ENCODE measurements at regions of chr17 and their contacts with region 1.

Region 1: DNA sequence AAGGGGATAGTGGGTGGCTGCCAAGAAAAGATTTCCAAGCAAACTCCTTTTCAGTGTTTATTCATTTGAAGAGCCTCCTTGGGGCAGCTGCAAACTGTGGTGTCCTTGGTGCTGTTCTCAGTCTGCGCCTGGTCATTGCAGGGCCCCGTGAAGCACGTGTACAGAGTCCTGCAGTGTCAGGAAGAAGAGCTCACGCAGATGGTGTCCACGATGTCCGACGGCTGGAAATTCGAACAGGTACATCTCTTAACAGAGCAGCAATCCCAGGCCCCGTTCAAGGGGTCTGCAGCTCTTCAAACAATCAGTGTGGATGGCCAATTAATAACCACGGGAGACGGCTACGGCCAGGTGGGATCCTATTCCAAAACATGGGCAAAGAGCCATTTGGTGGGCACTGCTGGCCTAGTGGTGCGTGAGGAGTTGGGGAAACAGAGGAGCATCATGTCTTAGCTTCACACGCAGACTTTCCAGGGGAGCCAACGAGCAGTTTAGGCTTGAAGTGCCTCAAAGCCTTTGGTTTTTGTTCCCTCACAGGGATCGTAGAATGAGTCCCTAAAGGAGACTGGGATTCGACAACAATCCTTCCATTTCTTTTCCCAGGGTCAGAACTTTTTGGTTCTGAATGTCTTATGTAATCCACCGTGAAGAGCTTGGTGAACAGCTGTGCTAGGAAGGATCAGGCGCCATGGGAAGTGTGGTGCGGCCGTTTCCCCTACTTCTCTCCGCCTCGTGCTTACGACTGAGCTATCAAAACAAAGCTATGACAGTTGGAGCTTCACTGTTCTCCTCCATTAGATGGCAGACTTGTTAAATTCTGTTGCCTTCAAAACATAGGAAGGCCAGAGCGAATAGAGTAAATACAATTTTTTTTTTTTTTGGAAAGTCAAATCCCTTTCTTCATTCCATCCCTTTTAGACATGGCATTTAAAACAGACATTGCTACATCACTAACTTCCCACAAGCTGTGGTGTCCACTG is 12.6 kb downstream of the KCTD2 start:
- DNase-seq: peak; percentile 82
- H3K4me3 ChIP-seq: no peak overlapping the region
- H3K27ac ChIP-seq: peak overlapping the region; percentile 70 to 79 (median 74)
- H3K4me1 ChIP-seq: peaks cover 0 to 18% (median 13%) of the 10 kb centered on the region in 4 donors
- H3K27me3 ChIP-seq: no peaks in the 10 kb centered on the region
- CTCF ChIP-seq: peak; percentile 30 to 45 (median 36)
- EP300 ChIP-seq: no peak
- POLR2A ChIP-seq: no peak

Region 2: GRCh38 chr17:74972107-74972972 is 87.3 kb before region 1 on chr17 and contains the start of gene HID1:
- intact Hi-C with region 1: no loop called
- DNase-seq: no peak
- H3K4me3 ChIP-seq: peak within 1 kb of the TSS; percentile 51 to 65 (median 56)
- H3K27ac ChIP-seq: peak within 1 kb of the TSS; percentile 28 to 61 (median 50)
- H3K4me1 ChIP-seq: peaks cover 0 to 24% (median 22%) of the 10 kb centered on the region in 4 donors
- H3K27me3 ChIP-seq: peaks cover 9 to 23% (median 23%) of the 10 kb centered on the region in 3 donors
- CTCF ChIP-seq: no peak
- EP300 ChIP-seq: no peak
- POLR2A ChIP-seq: no peak
- total RNA-seq, gene HID1: 7.1 to 21.6 (median 8.3) TPM

Region 3: DNA sequence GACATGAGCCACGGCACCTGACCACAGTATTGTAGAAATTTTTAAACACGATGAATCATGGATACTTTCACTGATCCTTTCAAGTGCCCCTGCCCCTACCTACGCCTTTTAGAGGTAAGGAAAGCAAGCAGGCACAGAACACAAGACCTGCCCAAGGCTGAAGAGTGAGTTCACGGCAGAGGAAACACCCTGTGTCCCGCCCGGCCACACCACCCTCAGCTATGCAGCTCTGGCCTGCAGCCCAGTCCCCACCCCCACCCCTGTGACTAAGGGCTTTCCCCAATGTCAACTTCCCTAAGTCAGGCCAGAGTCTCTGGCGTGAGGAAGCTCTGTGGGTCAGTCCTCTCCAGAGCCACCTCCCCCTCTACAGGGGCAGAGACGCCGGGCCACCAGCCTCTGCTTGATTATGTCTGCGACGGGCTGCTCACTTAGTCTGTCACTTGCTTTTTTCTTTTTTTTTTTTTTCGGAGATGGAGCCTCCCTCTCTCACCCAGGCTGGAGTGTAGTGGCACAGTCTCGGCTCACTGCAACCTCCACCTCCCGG is 36.5 kb after region 1 on chr17:
- intact Hi-C with region 1: no loop called
- DNase-seq: no peak
- H3K4me3 ChIP-seq: no peak overlapping the region
- H3K27ac ChIP-seq: peak overlapping the region in 1 of 4 donors; percentile 46
- H3K4me1 ChIP-seq: peaks cover 0 to 18% (median 9%) of the 10 kb centered on the region in 4 donors
- H3K27me3 ChIP-seq: no peaks in the 10 kb centered on the region
- CTCF ChIP-seq: no peak
- EP300 ChIP-seq: no peak
- POLR2A ChIP-seq: no peak

Region 4: DNA sequence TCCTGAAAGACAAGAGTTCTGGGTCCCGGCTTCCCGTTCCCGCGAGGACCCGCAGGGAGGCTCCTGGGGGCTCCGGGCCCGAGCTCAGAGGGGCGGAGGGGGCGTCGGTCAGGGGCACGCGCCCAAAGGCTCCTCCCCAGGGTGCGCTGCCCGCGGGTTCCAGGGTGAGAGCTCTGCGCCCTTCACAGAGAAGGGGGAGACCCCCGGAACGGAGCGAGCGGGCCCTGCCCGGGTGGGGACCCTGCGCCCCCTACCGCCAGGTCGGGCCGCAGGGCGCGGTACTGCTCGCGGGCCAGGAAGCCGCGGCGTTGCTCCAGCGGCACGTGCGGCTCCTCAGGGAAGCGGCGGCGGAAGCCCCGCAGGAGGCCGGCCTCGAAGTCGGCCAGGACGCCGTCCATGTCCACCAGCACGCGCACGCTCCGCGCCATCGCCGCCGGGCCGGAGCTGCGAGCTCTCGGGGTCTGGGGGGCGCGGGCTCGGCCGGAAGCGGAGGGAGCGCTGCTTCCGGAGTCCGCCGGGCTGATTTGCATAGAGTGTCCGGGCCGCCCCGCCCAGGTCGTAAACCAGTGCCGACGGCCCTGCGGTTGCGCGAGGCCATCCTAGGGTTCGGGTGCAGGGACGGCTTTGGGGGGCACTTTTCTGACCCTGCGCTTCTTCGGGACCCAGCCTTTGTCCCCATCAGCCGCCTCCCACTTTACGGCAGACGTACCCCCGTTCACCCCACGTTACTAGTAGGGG is 71.8 kb after region 1 on chr17 and contains the start of gene NT5C:
- intact Hi-C with region 1: loop called (anchors 2 kb)
- DNase-seq: peak; percentile 91
- H3K4me3 ChIP-seq: peak within 1 kb of the TSS; percentile 68 to 86 (median 74)
- H3K27ac ChIP-seq: peak within 1 kb of the TSS; percentile 88 to 91 (median 88)
- H3K4me1 ChIP-seq: peaks cover 0 to 23% (median 11%) of the 10 kb centered on the region in 4 donors
- H3K27me3 ChIP-seq: no peaks in the 10 kb centered on the region
- CTCF ChIP-seq: peak; percentile 43 to 72 (median 58)
- EP300 ChIP-seq: no peak
- POLR2A ChIP-seq: no peak
- total RNA-seq, gene NT5C: 60.7 to 109 (median 82.4) TPM

Region 5: GRCh38 chr17:75199886-75200618 is 140.4 kb after region 1 on chr17:
- intact Hi-C with region 1: loop called (anchors 5 kb)
- DNase-seq: no peak
- H3K4me3 ChIP-seq: no peak overlapping the region
- H3K27ac ChIP-seq: no peak overlapping the region
- H3K4me1 ChIP-seq: peaks cover 0 to 9% (median 4%) of the 10 kb centered on the region in 4 donors
- H3K27me3 ChIP-seq: no peaks in the 10 kb centered on the region
- CTCF ChIP-seq: no peak
- EP300 ChIP-seq: no peak
- POLR2A ChIP-seq: no peak

Measured in sigmoid colon (tissue), 7 donors.